ENCODE measurements at regions of chr17 and their contacts with region 1.

Region 1: GRCh38 chr17:70604854-70605253 is 435.5 kb downstream of the KCNJ2 start:
- DNase-seq: no peak
- H3K4me3 ChIP-seq: no peak overlapping the region
- H3K27ac ChIP-seq: no peak overlapping the region
- H3K4me1 ChIP-seq: peaks cover 0 to 6% (median 0%) of the 10 kb centered on the region in 4 experiments; a peak in 1 of 7 replicates
- H3K27me3 ChIP-seq: no peaks in the 10 kb centered on the region
- CTCF ChIP-seq: peak in 2 of 3 experiments; percentile 7 to 47; a peak in 1 of 4 replicates
- EP300 ChIP-seq: no peak
- POLR2A ChIP-seq: no peak
- RAD21 ChIP-seq: peak; percentile 4 to 23; a peak in 2 of 4 replicates

Region 2: DNA sequence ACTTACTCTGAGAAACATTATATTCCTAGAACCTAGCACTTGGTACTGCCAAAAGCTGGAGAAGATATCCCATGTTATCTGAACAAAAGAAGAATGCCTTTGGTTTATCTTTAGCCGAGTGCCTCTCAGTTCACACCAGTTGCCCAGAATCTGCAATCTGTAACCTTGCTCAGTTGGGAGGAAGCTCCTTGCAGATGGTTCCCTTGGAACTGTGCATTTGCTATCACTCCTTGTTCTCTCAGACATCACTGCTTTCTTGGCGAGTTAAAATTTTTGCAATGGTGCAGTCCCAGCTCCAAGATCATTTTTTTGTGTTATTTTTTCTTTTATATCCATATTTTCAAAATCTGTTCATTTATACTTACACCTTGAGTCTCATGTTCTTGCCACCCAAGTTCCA is 11.0 kb after region 1 on chr17:
- CTCF ChIA-PET with region 1: interaction called, 11 read pairs
- POLR2A ChIA-PET with region 1: no interaction called
- DNase-seq: no peak
- H3K4me3 ChIP-seq: no peak overlapping the region
- H3K27ac ChIP-seq: no peak overlapping the region
- H3K4me1 ChIP-seq: no peaks in the 10 kb centered on the region
- H3K27me3 ChIP-seq: no peaks in the 10 kb centered on the region
- CTCF ChIP-seq: no peak
- EP300 ChIP-seq: no peak
- POLR2A ChIP-seq: no peak
- RAD21 ChIP-seq: no peak

Measured in H1 (cell line).